ENCODE measurements at regions of chr18 and their contacts with region 1.

Region 1: GRCh38 chr18:32769693-32770665 is 2.8 kb downstream of the KLHL14 start:
- DNase-seq: no peak
- ATAC-seq: no peak
- H3K4me3 ChIP-seq: no peak overlapping the region
- H3K4me3 Mint-ChIP-seq: peak overlapping the region; percentile 43
- H3K27ac ChIP-seq: no peak overlapping the region
- H3K27ac Mint-ChIP-seq: no peak overlapping the region
- H3K4me1 ChIP-seq: no peaks in the 10 kb centered on the region
- H3K4me1 Mint-ChIP-seq: peaks cover 8% of the 10 kb centered on the region
- H3K27me3 ChIP-seq: peaks cover 5 to 11% of the 10 kb centered on the region in 2 experiments
- H3K27me3 Mint-ChIP-seq: peaks cover 43% of the 10 kb centered on the region
- CTCF ChIP-seq: no peak

Region 2: GRCh38 chr18:32735781-32736180 is 34.2 kb before region 1 on chr18:
- CTCF ChIA-PET with region 1: no interaction called
- POLR2A ChIA-PET with region 1: no interaction called
- intact Hi-C with region 1: loop called in 1 of 2 experiments (anchors 2 kb)
- DNase-seq: no peak
- ATAC-seq: no peak
- H3K4me3 ChIP-seq: no peak overlapping the region
- H3K4me3 Mint-ChIP-seq: no peak overlapping the region
- H3K27ac ChIP-seq: no peak overlapping the region
- H3K27ac Mint-ChIP-seq: no peak overlapping the region
- H3K4me1 ChIP-seq: no peaks in the 10 kb centered on the region
- H3K4me1 Mint-ChIP-seq: peaks cover 5% of the 10 kb centered on the region
- H3K27me3 ChIP-seq: no peaks in the 10 kb centered on the region
- H3K27me3 Mint-ChIP-seq: no peaks in the 10 kb centered on the region
- CTCF ChIP-seq: no peak

Measured in CD8-positive, alpha-beta T cell (primary cell).